ENCODE measurements at regions of chr6 and their contacts with region 1.

Region 1: GRCh38 chr6:5518936-5519491 is 257.7 kb downstream of the FARS2 start:
- DNase-seq: peak; percentile 21
- H3K4me3 Mint-ChIP-seq: peak overlapping the region; percentile 18
- H3K27ac Mint-ChIP-seq: peak overlapping the region; percentile 75
- H3K4me1 Mint-ChIP-seq: peaks cover 58% of the 10 kb centered on the region
- H3K27me3 Mint-ChIP-seq: no peaks in the 10 kb centered on the region

Region 2: GRCh38 chr6:5507131-5507681 is 11.8 kb before region 1 on chr6:
- CTCF ChIA-PET with region 1: interaction called, 3 read pairs
- POLR2A ChIA-PET with region 1: interaction called, 10 read pairs
- DNase-seq: no peak
- H3K4me3 Mint-ChIP-seq: no peak overlapping the region
- H3K27ac Mint-ChIP-seq: no peak overlapping the region
- H3K4me1 Mint-ChIP-seq: peaks cover 28% of the 10 kb centered on the region
- H3K27me3 Mint-ChIP-seq: no peaks in the 10 kb centered on the region

Region 3: DNA sequence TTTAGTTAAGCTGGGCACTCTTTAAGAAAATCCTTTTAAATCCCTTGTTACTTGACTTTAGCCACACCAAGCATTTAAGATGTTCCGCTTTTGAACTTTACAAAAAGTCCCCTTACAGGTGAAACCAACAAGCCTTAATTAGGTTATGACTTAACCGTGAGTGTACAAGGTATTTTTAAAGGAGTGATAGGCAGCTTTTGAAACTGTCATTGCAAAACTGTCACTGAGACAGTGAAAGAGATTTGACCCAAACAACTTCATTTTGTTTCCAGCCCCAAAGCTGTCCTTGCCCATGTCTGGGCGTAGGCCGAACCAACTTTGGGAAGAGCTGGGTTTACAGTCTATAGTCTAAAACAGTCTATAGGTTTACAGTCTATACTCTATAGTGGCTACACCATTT is 47.7 kb after region 1 on chr6:
- CTCF ChIA-PET with region 1: no interaction called
- POLR2A ChIA-PET with region 1: no interaction called
- DNase-seq: no peak
- H3K4me3 Mint-ChIP-seq: no peak overlapping the region
- H3K27ac Mint-ChIP-seq: no peak overlapping the region
- H3K4me1 Mint-ChIP-seq: peaks cover 9% of the 10 kb centered on the region
- H3K27me3 Mint-ChIP-seq: no peaks in the 10 kb centered on the region

Region 4: DNA sequence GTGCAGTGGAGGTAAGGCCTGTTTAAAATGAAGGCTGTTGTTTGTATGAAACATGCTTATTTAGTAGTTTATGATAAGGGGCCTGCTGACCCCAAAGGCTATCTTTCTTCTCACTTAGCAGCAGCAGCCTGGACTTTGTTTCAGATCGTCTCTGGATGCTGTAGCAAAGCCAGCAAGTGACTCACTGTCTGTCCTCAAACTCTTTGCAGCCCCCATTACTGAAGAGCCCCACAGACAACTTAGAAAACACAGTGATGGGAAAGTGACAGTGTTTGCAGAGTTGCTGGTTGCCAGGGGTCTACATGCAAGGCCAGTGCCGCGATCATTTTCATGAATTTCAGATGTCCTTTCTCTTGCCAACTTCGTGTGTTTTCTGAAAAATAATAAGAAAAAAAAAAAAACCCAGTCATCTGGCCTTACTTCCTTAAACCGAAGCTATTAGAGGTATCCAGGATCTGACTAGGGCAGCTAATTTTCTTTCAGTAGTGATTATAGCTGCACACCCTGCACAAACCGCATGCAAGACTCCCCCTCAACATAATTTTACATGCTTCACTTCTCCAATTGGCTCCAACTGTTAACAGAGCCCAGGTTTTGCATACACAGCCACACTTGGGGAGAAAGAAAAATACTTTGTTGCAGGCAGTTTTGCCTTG is 813.1 kb after region 1 on chr6:
- CTCF ChIA-PET with region 1: no interaction called
- POLR2A ChIA-PET with region 1: no interaction called
- DNase-seq: no peak
- H3K4me3 Mint-ChIP-seq: no peak overlapping the region
- H3K27ac Mint-ChIP-seq: no peak overlapping the region
- H3K4me1 Mint-ChIP-seq: peaks cover 2% of the 10 kb centered on the region
- H3K27me3 Mint-ChIP-seq: peaks cover 3% of the 10 kb centered on the region